ENCODE measurements at regions of chr15 and their contacts with region 1.

Region 1: GRCh38 chr15:22243440-22244130 is 163.3 kb downstream of the OR4M2 start:
- DNase-seq: no peak
- H3K4me3 ChIP-seq: no peak overlapping the region
- H3K27ac ChIP-seq: no peak overlapping the region
- H3K4me1 ChIP-seq: no peaks in the 10 kb centered on the region
- H3K27me3 ChIP-seq: no peaks in the 10 kb centered on the region
- CTCF ChIP-seq: no peak
- EP300 ChIP-seq: no peak
- POLR2A ChIP-seq: no peak

Region 2: DNA sequence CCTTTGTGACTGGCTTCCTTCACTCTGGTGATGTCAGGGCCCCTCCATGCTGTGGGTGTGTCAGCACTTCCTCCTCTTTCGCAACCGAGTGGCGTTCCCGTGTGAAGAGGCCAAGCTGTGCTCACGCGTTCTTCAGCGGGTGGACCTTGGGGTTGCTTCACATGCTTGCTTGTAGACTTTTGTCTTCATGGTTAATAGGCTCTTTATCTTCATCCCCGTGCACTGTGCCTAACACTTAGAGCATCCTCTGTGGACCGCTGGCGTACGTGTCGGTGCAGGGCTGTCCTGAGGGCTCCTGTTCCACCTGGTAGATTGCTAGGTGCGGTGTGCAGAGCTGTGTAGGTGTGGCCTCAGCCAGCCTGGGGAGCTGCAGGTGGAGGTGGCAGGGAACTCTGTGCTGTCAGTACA is 19.0 kb after region 1 on chr15:
- intact Hi-C with region 1: loop called in 1 of 4 experiments (anchors 2 kb)
- DNase-seq: peak in 1 of 5 donors; percentile 34
- H3K4me3 ChIP-seq: no peak overlapping the region
- H3K27ac ChIP-seq: no peak overlapping the region
- H3K4me1 ChIP-seq: peaks cover 3% of the 10 kb centered on the region
- H3K27me3 ChIP-seq: no peaks in the 10 kb centered on the region
- CTCF ChIP-seq: no peak
- EP300 ChIP-seq: no peak
- POLR2A ChIP-seq: no peak

Measured in ovary (tissue), 10 donors.